Right ventricle myocardium inferior (tissue), 1 donor: ENCODE measurements at regions of chr5 and their contacts with region 1.

Region 1: GRCh38 chr5:42423285-42424165 is at the start of gene GHR:
- DNase-seq: peak; percentile 87
- ATAC-seq: peak; percentile 94
- total RNA-seq, gene GHR: 14.7 TPM

Region 2: DNA sequence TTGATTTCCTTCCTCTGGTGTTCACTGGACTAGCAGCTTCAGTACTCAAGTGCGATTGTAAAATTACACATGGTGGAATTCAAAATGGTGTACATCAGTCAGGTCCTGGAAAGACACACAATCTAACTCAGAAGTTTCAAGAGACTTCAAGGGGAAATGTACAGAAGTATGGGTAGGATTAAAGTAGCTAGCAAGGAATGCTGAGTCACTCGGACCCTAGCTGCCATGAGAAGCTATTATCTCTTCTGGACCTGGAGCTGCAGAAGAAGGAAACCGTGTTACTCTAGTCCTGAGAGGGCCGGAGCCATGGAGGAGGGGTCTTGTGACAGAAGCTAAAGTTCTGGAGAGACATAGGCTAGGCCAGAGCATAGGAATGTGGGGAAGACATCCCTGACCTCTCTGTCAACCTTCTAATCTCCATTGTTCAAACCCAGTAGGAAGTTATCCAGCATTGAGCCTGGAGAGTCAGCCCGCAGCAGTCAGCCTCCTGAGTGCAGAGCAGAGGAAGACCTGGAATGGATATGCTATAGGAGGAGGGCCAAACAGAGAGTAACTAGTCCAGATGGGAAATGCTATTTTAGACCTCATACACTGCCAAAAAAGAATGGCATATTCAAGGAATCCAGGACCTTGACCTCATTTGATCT is 84.0 kb after region 1 on chr5:
- intact Hi-C with region 1: loop called (anchors 5 kb)
- DNase-seq: no peak
- ATAC-seq: peak; percentile 84

Region 3: GRCh38 chr5:42583322-42583721 is 159.8 kb after region 1 on chr5:
- intact Hi-C with region 1: loop called (anchors 1 kb)
- DNase-seq: peak; percentile 65
- ATAC-seq: peak; percentile 70

Region 4: DNA sequence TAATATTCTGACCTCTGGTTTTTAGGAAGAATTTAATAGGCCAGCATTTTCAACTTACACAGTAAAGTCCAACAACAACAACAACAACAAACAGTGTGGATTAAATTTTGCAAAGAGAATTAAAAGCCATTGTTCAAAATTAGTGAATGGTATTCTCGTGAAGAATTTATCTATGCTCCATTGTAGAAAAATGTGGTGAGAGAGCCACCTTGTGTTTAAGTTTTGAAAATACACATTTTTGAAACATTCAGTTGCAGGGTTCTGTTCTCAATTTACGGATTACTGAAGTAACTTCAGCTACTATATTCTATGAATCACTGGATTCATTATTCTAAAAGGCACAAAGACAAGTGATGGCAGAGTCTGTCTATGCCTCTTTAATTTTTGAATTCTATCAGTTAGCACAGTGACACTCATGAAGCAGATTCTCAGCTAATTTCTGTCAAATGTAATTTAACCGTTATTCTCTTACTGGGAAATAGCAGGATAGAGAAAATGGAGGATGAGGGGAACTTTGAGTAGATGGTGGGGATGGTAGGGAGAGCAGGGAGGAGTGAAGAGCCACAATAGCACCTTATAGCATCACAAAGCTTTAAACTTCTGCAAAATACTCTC is 344.1 kb after region 1 on chr5:
- intact Hi-C with region 1: loop called (anchors 10 kb)
- DNase-seq: no peak
- ATAC-seq: no peak